ENCODE measurements at regions of chr6 and their contacts with region 1.

Region 1: DNA sequence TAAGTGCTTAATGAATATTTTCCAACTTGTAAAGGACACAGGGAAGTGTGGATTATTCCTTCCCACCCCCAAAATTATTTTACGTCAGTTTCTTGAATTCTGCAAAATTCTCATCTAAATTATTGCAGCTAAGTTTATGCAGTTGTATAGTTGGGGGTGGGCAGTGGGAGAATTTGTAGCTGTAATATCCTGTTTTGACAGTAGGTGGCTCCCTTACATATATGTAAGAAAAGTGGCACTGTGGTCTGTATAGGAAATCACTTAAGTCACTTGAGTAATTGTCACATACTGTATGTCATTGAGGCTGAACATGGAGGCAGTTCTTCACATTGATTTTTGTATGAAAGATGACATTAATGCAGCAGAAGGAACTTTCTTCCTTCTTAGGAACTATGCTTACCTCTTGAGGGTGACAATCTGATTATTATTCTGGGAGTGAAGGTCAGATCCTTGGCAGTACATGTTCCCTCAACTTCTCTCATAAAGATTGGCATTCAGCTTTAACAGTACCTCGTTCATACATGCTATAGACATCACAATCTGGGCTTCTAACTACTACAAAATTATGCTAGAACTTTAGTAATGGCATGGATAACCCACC is 14.7 kb upstream of the CFAP206 start:
- DNase-seq: no peak
- ATAC-seq: peak; percentile 84
- H3K4me3 ChIP-seq: no peak overlapping the region
- H3K27ac ChIP-seq: no peak overlapping the region
- H3K4me1 ChIP-seq: no peaks in the 10 kb centered on the region
- H3K27me3 ChIP-seq: no peaks in the 10 kb centered on the region
- CTCF ChIP-seq: peak; percentile 55 to 63 (median 58); a peak in 5 of 6 replicates
- EP300 ChIP-seq: no peak
- POLR2A ChIP-seq: no peak
- RAD21 ChIP-seq: peak; percentile 78

Region 2: DNA sequence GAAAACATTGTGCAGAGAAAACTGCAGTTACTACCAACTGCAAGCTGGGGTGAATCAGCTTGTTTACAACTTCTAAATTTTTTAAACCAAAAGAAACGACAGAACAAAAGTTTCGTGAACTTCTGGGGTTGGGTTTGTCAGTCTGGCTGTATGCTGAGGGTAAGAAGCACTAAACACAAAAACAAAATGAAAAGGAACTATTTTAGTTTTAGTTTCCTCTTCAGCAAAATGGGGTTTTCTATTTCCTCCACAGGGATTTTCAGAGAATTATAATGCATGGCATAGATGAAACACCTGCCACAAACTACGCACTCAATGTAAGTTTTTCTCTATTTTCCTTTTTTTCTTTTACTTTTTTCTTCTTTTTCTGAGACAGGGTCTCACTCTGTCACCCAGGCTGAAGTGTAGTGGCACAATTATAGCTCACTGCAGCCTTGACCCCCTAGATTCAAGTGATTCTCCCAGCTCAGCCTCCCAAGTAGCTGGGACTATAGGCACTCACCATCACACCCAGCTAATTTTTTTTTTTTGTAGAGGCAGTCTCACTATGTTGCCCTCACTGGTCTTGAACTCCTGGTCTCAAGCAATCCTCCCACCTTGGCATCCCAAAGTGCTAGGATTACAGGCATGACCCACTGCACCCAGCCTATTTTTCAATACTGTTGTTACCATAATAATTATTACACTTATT is 338.8 kb before region 1 on chr6:
- CTCF ChIA-PET with region 1: no interaction called
- POLR2A ChIA-PET with region 1: no interaction called
- RAD21 ChIA-PET with region 1: no interaction called
- SMC1A ChIA-PET with region 1: no interaction called
- in situ Hi-C with region 1: no loop called
- intact Hi-C with region 1: no loop called
- DNase-seq: no peak
- ATAC-seq: no peak
- H3K4me3 ChIP-seq: no peak overlapping the region
- H3K27ac ChIP-seq: no peak overlapping the region
- H3K4me1 ChIP-seq: peaks cover 4% of the 10 kb centered on the region
- H3K27me3 ChIP-seq: no peaks in the 10 kb centered on the region
- CTCF ChIP-seq: no peak
- EP300 ChIP-seq: no peak
- POLR2A ChIP-seq: no peak
- RAD21 ChIP-seq: no peak

Region 3: GRCh38 chr6:87066449-87067333 is 326.4 kb before region 1 on chr6:
- CTCF ChIA-PET with region 1: interaction called, 17 read pairs
- POLR2A ChIA-PET with region 1: no interaction called
- RAD21 ChIA-PET with region 1: interaction called, 10 read pairs
- SMC1A ChIA-PET with region 1: interaction called, 8 read pairs
- in situ Hi-C with region 1: no loop called
- intact Hi-C with region 1: loop called (anchors 5 kb)
- DNase-seq: peak; percentile 28
- ATAC-seq: peak; percentile 53; the same call in 2 of the 3 replicates
- H3K4me3 ChIP-seq: no peak overlapping the region
- H3K27ac ChIP-seq: no peak overlapping the region
- H3K4me1 ChIP-seq: peaks cover 4% of the 10 kb centered on the region
- H3K27me3 ChIP-seq: no peaks in the 10 kb centered on the region
- CTCF ChIP-seq: peak; percentile 44 to 77 (median 62); a peak in 5 of 6 replicates
- EP300 ChIP-seq: no peak
- POLR2A ChIP-seq: no peak
- RAD21 ChIP-seq: peak; percentile 89

Region 4: GRCh38 chr6:87139236-87139635 is 253.9 kb before region 1 on chr6:
- CTCF ChIA-PET with region 1: interaction called, 39 read pairs
- POLR2A ChIA-PET with region 1: no interaction called
- RAD21 ChIA-PET with region 1: interaction called, 18 read pairs
- SMC1A ChIA-PET with region 1: interaction called, 27 read pairs
- in situ Hi-C with region 1: loop called (anchors 5 kb)
- intact Hi-C with region 1: loop called (anchors 1 kb)
- DNase-seq: no peak
- ATAC-seq: peak; percentile 91
- H3K4me3 ChIP-seq: no peak overlapping the region
- H3K27ac ChIP-seq: no peak overlapping the region
- H3K4me1 ChIP-seq: no peaks in the 10 kb centered on the region
- H3K27me3 ChIP-seq: no peaks in the 10 kb centered on the region
- CTCF ChIP-seq: peak; percentile 69 to 84 (median 77)
- EP300 ChIP-seq: no peak
- POLR2A ChIP-seq: no peak
- RAD21 ChIP-seq: peak; percentile 95

Region 5: GRCh38 chr6:87251225-87251624 is 141.9 kb before region 1 on chr6:
- CTCF ChIA-PET with region 1: no interaction called
- POLR2A ChIA-PET with region 1: no interaction called
- RAD21 ChIA-PET with region 1: no interaction called
- SMC1A ChIA-PET with region 1: no interaction called
- in situ Hi-C with region 1: no loop called
- intact Hi-C with region 1: no loop called
- DNase-seq: no peak
- ATAC-seq: peak; percentile 66
- H3K4me3 ChIP-seq: no peak overlapping the region
- H3K27ac ChIP-seq: peak overlapping the region; percentile 0; the same call in 1 of the 2 replicates
- H3K4me1 ChIP-seq: peaks cover 3% of the 10 kb centered on the region; the same call in 1 of the 2 replicates
- H3K27me3 ChIP-seq: no peaks in the 10 kb centered on the region
- CTCF ChIP-seq: no peak
- EP300 ChIP-seq: no peak
- POLR2A ChIP-seq: no peak
- RAD21 ChIP-seq: no peak

Region 6: DNA sequence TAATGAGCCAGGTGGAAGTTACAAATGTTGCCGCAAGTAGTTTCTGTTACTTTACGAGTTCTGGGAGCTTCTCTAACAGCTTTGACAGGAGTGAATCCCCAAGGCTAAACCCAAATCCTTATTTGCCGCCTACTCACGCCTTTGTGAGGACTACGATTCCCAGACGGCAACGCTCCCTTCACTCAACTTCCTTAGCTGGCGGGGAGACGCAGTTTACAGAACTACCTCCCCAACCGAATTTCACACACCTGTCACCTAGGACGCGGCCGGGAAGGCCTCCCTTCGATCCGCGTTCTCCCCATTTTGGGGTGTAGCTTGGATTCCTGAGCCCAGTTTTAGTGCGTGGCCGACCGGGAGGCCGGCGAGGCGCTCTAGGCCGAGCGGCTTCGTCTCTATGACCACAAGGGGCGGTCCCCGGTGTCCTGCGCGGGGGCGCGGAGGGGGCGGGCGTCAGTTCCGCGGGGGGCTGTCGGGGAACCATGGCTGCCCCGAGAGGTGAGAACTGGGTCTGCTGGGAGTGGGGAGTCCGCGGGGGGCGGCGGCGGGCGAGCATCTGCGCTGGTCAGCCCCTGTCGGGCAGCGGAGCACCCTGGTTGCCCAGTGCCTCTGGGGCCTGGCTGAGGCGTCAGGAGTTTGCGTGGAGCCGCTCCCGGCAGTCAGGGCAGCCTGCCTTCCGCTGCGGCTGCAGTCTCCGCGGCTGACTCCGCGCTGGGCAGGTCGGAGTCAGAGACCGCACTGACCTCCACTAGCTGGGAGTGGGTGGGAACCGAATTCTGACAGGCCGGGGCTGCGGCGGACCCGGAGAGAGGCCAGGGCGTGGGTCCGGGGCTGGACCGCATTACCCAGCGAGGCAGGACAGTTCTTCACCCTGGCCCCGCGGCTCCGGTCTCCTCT is 79.7 kb after region 1 on chr6 and contains the start of gene SLC35A1:
- CTCF ChIA-PET with region 1: interaction called, 5 read pairs
- POLR2A ChIA-PET with region 1: no interaction called
- RAD21 ChIA-PET with region 1: no interaction called
- SMC1A ChIA-PET with region 1: interaction called, 3 read pairs
- in situ Hi-C with region 1: no loop called
- intact Hi-C with region 1: loop called (anchors 2 kb)
- DNase-seq: peak; percentile 65
- ATAC-seq: peak; percentile 94
- H3K4me3 ChIP-seq: peak within 1 kb of the TSS; percentile 97
- H3K27ac ChIP-seq: peak within 1 kb of the TSS; percentile 72
- H3K4me1 ChIP-seq: no peaks in the 10 kb centered on the region
- H3K27me3 ChIP-seq: no peaks in the 10 kb centered on the region
- CTCF ChIP-seq: 0 out of 6 replicates have a peak, but pooled peaks of 1 of the 3 experiments have one; percentile 6
- EP300 ChIP-seq: no peak
- POLR2A ChIP-seq: peak; percentile 89
- RAD21 ChIP-seq: no peak
- polyA plus RNA-seq, gene SLC35A1: 15.1 to 28.0 TPM

Region 7: DNA sequence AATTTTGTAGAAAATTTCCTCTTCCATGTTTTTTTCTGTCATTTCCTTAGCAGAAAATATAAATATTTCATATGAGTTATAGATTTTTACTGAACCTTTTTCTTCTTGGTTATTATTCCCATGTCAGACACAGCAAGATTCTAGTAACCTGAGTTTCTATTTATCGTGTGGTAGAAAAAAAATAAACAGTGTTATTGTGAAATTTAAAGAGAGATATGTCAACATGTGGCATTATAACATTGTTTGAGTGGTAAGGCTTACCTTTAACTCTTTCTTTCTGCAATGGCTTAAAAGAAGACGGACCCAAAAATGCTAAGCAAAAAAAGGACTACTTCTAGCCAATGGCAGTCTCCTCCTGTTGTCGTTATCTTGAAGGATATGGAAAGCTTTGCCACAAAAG is 215.7 kb after region 1 on chr6:
- CTCF ChIA-PET with region 1: no interaction called
- POLR2A ChIA-PET with region 1: no interaction called
- RAD21 ChIA-PET with region 1: no interaction called
- SMC1A ChIA-PET with region 1: no interaction called
- in situ Hi-C with region 1: no loop called
- intact Hi-C with region 1: no loop called
- DNase-seq: no peak
- ATAC-seq: no peak
- H3K4me3 ChIP-seq: no peak overlapping the region
- H3K27ac ChIP-seq: no peak overlapping the region
- H3K4me1 ChIP-seq: no peaks in the 10 kb centered on the region
- H3K27me3 ChIP-seq: no peaks in the 10 kb centered on the region
- CTCF ChIP-seq: no peak
- EP300 ChIP-seq: no peak
- POLR2A ChIP-seq: no peak
- RAD21 ChIP-seq: no peak

Region 8: DNA sequence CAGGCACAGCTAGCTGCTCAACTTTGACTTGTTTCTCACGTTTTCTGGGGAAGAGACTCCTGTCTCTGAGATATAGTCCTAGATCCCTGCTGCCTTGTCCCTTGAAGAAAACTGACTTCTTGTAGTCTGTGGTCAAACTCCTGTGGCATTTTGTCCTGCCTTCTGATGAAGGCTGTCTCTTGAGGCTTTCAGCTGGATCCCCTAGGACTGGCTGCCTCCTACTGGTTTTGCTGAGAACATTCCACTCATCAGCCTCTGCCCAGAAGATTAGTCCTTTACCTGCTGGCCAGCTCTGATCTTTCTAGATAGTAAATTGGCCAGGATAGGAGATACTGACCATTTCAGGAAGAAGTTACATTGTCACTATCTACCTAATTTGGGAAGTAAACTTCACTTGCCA is 844.9 kb after region 1 on chr6:
- CTCF ChIA-PET with region 1: interaction called, 13 read pairs
- POLR2A ChIA-PET with region 1: no interaction called
- RAD21 ChIA-PET with region 1: interaction called, 9 read pairs
- SMC1A ChIA-PET with region 1: interaction called, 4 read pairs
- in situ Hi-C with region 1: no loop called
- intact Hi-C with region 1: loop called (anchors 2 kb)
- DNase-seq: peak; percentile 33
- ATAC-seq: peak; percentile 92
- H3K4me3 ChIP-seq: no peak overlapping the region
- H3K27ac ChIP-seq: no peak overlapping the region
- H3K4me1 ChIP-seq: peaks cover 3% of the 10 kb centered on the region; the same call in 1 of the 2 replicates
- H3K27me3 ChIP-seq: no peaks in the 10 kb centered on the region
- CTCF ChIP-seq: peak; percentile 64 to 77 (median 66); a peak in 5 of 6 replicates
- EP300 ChIP-seq: no peak
- POLR2A ChIP-seq: no peak
- RAD21 ChIP-seq: peak; percentile 97

Region 9: GRCh38 chr6:88919032-88919431 is 1525.9 kb after region 1 on chr6:
- CTCF ChIA-PET with region 1: interaction called, 12 read pairs
- POLR2A ChIA-PET with region 1: no interaction called
- RAD21 ChIA-PET with region 1: interaction called, 8 read pairs
- SMC1A ChIA-PET with region 1: interaction called, 9 read pairs
- in situ Hi-C with region 1: no loop called
- intact Hi-C with region 1: no loop called
- DNase-seq: no peak
- ATAC-seq: 0 out of 3 replicates have a peak, but pooled peaks have one; percentile 31
- H3K4me3 ChIP-seq: no peak overlapping the region
- H3K27ac ChIP-seq: no peak overlapping the region
- H3K4me1 ChIP-seq: no peaks in the 10 kb centered on the region
- H3K27me3 ChIP-seq: no peaks in the 10 kb centered on the region
- CTCF ChIP-seq: peak in 2 of 3 experiments; percentile 5 to 25; a peak in 3 of 6 replicates
- EP300 ChIP-seq: no peak
- POLR2A ChIP-seq: no peak
- RAD21 ChIP-seq: 0 out of 2 replicates have a peak, but pooled peaks have one; percentile 9